Activated B cell treated with CpG ODN at 0.5 μM for 24 hours (primary cell): ENCODE measurements at regions of chr4 and their contacts with region 1.

Region 1: GRCh38 chr4:25842229-25842845 is 20.5 kb downstream of the SEL1L3 start:
- DNase-seq: peak; percentile 51
- ATAC-seq: peak; percentile 87
- H3K4me3 Mint-ChIP-seq: peak overlapping the region; percentile 61
- H3K27ac Mint-ChIP-seq: peak overlapping the region; percentile 86
- H3K4me1 Mint-ChIP-seq: peaks cover 77% of the 10 kb centered on the region
- H3K27me3 Mint-ChIP-seq: no peaks in the 10 kb centered on the region
- CTCF ChIP-seq: no peak

Region 2: GRCh38 chr4:25857403-25857802 is 15.1 kb after region 1 on chr4:
- CTCF ChIA-PET with region 1: interaction called, 22 read pairs
- POLR2A ChIA-PET with region 1: interaction called, 9 read pairs
- intact Hi-C with region 1: loop called (anchors 1 kb)
- DNase-seq: no peak
- ATAC-seq: no peak
- H3K4me3 Mint-ChIP-seq: peak overlapping the region; percentile 12
- H3K27ac Mint-ChIP-seq: peak overlapping the region; percentile 99
- H3K4me1 Mint-ChIP-seq: peaks cover 95% of the 10 kb centered on the region
- H3K27me3 Mint-ChIP-seq: no peaks in the 10 kb centered on the region
- CTCF ChIP-seq: no peak

Region 3: GRCh38 chr4:25913851-25914669 is 71.7 kb after region 1 on chr4 and contains the start of gene SMIM20:
- CTCF ChIA-PET with region 1: interaction called, 16 read pairs
- POLR2A ChIA-PET with region 1: interaction called, 28 read pairs
- intact Hi-C with region 1: loop called (anchors 1 kb)
- DNase-seq: peak; percentile 85
- ATAC-seq: peak; percentile 92
- H3K4me3 Mint-ChIP-seq: peak within 1 kb of the TSS; percentile 99
- H3K27ac Mint-ChIP-seq: peak within 1 kb of the TSS; percentile 97
- H3K4me1 Mint-ChIP-seq: peaks cover 36% of the 10 kb centered on the region
- H3K27me3 Mint-ChIP-seq: no peaks in the 10 kb centered on the region
- CTCF ChIP-seq: no peak
- total RNA-seq, gene SMIM20: 16.6 and 18.7 TPM in 2 replicates

Region 4: GRCh38 chr4:25993395-25994185 is 151.3 kb after region 1 on chr4:
- CTCF ChIA-PET with region 1: interaction called, 13 read pairs
- POLR2A ChIA-PET with region 1: no interaction called
- intact Hi-C with region 1: loop called (anchors 1 kb)
- DNase-seq: no peak
- ATAC-seq: peak; percentile 70
- H3K4me3 Mint-ChIP-seq: no peak overlapping the region
- H3K27ac Mint-ChIP-seq: no peak overlapping the region
- H3K4me1 Mint-ChIP-seq: peaks cover 8% of the 10 kb centered on the region
- H3K27me3 Mint-ChIP-seq: no peaks in the 10 kb centered on the region
- CTCF ChIP-seq: no peak

Region 5: GRCh38 chr4:26161030-26161824 is 318.9 kb after region 1 on chr4:
- CTCF ChIA-PET with region 1: no interaction called
- POLR2A ChIA-PET with region 1: no interaction called
- intact Hi-C with region 1: loop called (anchors 5 kb)
- DNase-seq: no peak
- ATAC-seq: no peak
- H3K4me3 Mint-ChIP-seq: no peak overlapping the region
- H3K27ac Mint-ChIP-seq: no peak overlapping the region
- H3K4me1 Mint-ChIP-seq: no peaks in the 10 kb centered on the region
- H3K27me3 Mint-ChIP-seq: no peaks in the 10 kb centered on the region
- CTCF ChIP-seq: no peak

Region 6: GRCh38 chr4:26410385-26411293 is 568.3 kb after region 1 on chr4:
- CTCF ChIA-PET with region 1: interaction called, 20 read pairs
- POLR2A ChIA-PET with region 1: interaction called, 6 read pairs
- intact Hi-C with region 1: loop called (anchors 1 kb)
- DNase-seq: no peak
- ATAC-seq: no peak
- H3K4me3 Mint-ChIP-seq: no peak overlapping the region
- H3K27ac Mint-ChIP-seq: no peak overlapping the region
- H3K4me1 Mint-ChIP-seq: no peaks in the 10 kb centered on the region
- H3K27me3 Mint-ChIP-seq: no peaks in the 10 kb centered on the region
- CTCF ChIP-seq: no peak